ENCODE measurements at regions of chr2 and their contacts with region 1.

Region 1: GRCh38 chr2:96533292-96534073 is 3.1 kb upstream of the ARID5A start:
- DNase-seq: no peak
- ATAC-seq: no peak
- H3K4me3 ChIP-seq: no peak overlapping the region
- H3K27ac ChIP-seq: peak overlapping the region; percentile 77
- H3K4me1 ChIP-seq: peaks cover 64% of the 10 kb centered on the region
- H3K27me3 ChIP-seq: no peaks in the 10 kb centered on the region
- CTCF ChIP-seq: no peak

Region 2: DNA sequence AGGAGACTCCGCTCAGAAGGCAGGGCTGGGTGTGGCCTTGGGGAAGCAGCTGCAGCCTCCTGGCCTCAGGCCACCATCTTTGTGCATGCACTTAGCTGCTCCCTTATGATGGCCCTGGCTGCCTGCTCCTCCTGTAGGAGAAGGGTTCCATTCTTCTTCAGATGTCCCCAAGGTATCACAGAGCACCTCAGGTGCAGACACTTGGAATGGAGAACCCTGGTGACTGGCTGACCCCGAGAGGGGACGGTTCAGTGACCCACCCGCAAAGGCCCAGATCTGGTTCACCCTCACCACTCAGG is 508.3 kb before region 1 on chr2:
- CTCF ChIA-PET with region 1: no interaction called
- POLR2A ChIA-PET with region 1: no interaction called
- in situ Hi-C with region 1: no loop called
- intact Hi-C with region 1: no loop called
- DNase-seq: no peak
- ATAC-seq: no peak
- H3K4me3 ChIP-seq: no peak overlapping the region
- H3K27ac ChIP-seq: no peak overlapping the region
- H3K4me1 ChIP-seq: no peaks in the 10 kb centered on the region
- H3K27me3 ChIP-seq: no peaks in the 10 kb centered on the region
- CTCF ChIP-seq: no peak

Region 3: GRCh38 chr2:96514521-96514920 is 19.0 kb before region 1 on chr2:
- CTCF ChIA-PET with region 1: no interaction called
- POLR2A ChIA-PET with region 1: interaction called, 18 read pairs
- in situ Hi-C with region 1: no loop called
- intact Hi-C with region 1: no loop called
- DNase-seq: no peak
- ATAC-seq: no peak
- H3K4me3 ChIP-seq: no peak overlapping the region
- H3K27ac ChIP-seq: no peak overlapping the region
- H3K4me1 ChIP-seq: peaks cover 3% of the 10 kb centered on the region; the same call in 1 of the 2 replicates
- H3K27me3 ChIP-seq: no peaks in the 10 kb centered on the region
- CTCF ChIP-seq: no peak